ENCODE measurements at regions of chr14 and their contacts with region 1.

Region 1: DNA sequence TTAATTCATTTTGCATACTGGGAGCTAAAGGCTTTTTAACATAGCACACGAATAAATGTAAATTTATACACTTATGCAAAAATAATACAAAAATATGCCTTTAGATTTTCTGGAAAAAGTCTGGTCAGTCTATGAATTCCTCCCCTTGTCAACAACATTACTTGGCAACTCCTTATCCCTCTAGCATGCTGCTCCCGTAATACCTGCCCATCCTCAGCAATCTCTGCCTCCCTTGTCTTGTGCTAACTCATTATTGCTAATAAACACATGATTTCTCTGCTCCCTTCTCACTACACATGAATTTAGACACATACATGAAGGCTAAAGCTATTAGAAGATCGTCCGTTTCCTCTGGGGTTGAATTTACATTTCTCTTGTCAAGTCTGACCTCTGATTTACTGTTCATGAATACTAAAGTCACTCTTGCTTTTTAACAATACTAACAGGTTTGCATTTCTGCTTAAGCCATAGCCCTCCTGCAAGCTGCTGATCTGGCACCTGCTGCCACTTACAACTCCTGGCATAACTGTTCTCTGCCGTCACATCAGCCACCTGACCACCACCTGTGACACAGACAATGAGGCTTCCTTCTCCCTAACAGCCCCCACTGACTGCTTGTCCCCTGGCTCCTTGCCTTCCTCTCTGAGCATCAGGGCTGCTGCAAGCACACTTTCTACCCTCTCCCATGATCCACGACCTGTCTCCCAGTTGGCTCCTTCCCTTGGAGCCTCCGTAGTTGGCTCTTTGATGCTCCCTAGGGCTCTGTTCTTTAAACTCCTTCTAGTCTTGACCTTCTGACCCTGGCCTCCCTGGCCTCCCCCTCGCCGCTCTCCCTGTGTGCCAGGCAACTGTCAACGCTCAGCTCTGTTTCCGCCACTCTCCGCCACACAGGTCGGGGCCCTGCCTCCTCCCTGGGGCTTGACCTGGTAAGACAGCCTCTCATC is 177.6 kb downstream of the CALM1 start:
- DNase-seq: peak; percentile 81
- ATAC-seq: peak; percentile 82

Region 2: GRCh38 chr14:89479802-89480201 is 1094.7 kb before region 1 on chr14:
- intact Hi-C with region 1: no loop called
- DNase-seq: no peak
- ATAC-seq: no peak

Region 3: GRCh38 chr14:89823743-89824142 is 750.7 kb before region 1 on chr14:
- intact Hi-C with region 1: no loop called
- DNase-seq: no peak
- ATAC-seq: no peak

Region 4: DNA sequence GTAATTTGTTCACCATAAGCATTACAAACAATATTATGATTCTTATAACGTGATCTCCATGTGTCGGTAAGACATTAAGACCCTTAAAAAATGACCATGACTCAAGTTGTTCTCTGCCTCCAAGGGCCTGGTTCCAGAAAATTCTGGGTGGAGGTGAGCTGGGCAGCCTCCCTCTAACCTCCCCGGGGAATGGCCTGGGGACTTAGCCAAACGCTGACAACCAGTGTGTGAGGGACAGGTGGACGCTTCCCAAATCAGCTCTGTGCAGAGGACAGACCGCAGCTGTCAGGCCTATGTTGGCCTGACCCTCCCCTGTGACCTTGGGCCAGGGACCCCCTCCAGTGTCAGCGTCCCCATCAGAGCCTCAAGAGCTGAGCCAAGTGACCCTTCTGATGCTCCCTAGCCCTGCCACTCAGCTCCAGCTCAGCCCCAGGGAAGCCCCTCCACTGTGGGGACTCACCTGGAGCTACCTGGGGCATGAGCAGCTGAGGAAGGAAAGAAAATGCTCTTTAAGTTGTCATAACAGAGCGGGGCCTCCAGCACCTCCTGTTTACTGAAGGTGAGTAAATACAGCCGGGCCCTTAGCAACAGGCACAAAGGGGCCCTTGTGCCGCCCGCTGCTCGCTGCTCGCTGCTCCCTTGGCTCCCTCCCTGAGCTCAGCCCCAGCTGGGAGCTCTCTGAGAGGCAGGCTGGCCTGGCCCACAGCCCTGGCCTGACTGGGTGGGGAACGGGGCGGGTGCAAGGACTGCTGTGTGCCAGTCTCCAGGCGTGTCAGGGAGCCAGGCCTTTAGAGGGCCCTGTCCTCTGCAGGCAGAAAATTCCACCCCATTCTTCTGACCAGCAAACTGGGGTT is 61.1 kb before region 1 on chr14:
- intact Hi-C with region 1: loop called (anchors 2 kb)
- DNase-seq: peak; percentile 91
- ATAC-seq: peak; percentile 91

Region 5: GRCh38 chr14:90545966-90546751 is 28.3 kb before region 1 on chr14:
- intact Hi-C with region 1: loop called (anchors 2 kb)
- DNase-seq: no peak
- ATAC-seq: peak; percentile 90

Region 6: GRCh38 chr14:90556012-90556477 is 18.4 kb before region 1 on chr14:
- intact Hi-C with region 1: loop called (anchors 2 kb)
- DNase-seq: no peak
- ATAC-seq: peak; percentile 52

Measured in Right ventricle myocardium inferior (tissue), 1 donor.